Activated CD4-positive, alpha-beta T cell treated with anti-CD3 and anti-CD28 coated beads, Interleukin-2, amount 10 ng/mL, durations not matched to agents 24 days and 14 days (primary cell): ENCODE measurements at regions of chr5 and their contacts with region 1.

Region 1: GRCh38 chr5:18314192-18314778 is 680.0 kb downstream of the TAF11L14 start:
- DNase-seq: no peak
- H3K4me3 Mint-ChIP-seq: no peak overlapping the region
- H3K27ac Mint-ChIP-seq: no peak overlapping the region
- H3K4me1 Mint-ChIP-seq: no peaks in the 10 kb centered on the region
- H3K27me3 Mint-ChIP-seq: no peaks in the 10 kb centered on the region

Region 2: GRCh38 chr5:17216176-17216973 is 1097.9 kb before region 1 on chr5:
- intact Hi-C with region 1: loop called (anchors 1 kb)
- DNase-seq: peak; percentile 83
- H3K4me3 Mint-ChIP-seq: peak overlapping the region; percentile 55
- H3K27ac Mint-ChIP-seq: no peak overlapping the region
- H3K4me1 Mint-ChIP-seq: peaks cover 6% of the 10 kb centered on the region
- H3K27me3 Mint-ChIP-seq: peaks cover 43% of the 10 kb centered on the region